ENCODE measurements at regions of chr14 and their contacts with region 1.

Region 1: GRCh38 chr14:104708606-104709268 is 15.3 kb upstream of the ADSS1 start:
- DNase-seq: peak; percentile 58 to 86
- H3K4me3 ChIP-seq: no peak overlapping the region
- H3K27ac ChIP-seq: peak overlapping the region; percentile 54 to 55
- H3K4me1 ChIP-seq: peaks cover 0 to 8% (median 4%) of the 10 kb centered on the region in 4 donors
- H3K27me3 ChIP-seq: no peaks in the 10 kb centered on the region
- CTCF ChIP-seq: peak; percentile 96 to 98

Region 2: GRCh38 chr14:104650057-104650981 is 58.4 kb before region 1 on chr14:
- intact Hi-C with region 1: loop called (anchors 1 kb)
- DNase-seq: peak; percentile 51 to 83
- H3K4me3 ChIP-seq: peak overlapping the region; percentile 31 to 51
- H3K27ac ChIP-seq: no peak overlapping the region
- H3K4me1 ChIP-seq: peaks cover 0 to 11% (median 7%) of the 10 kb centered on the region in 4 donors
- H3K27me3 ChIP-seq: peaks cover 0 to 18% of the 10 kb centered on the region in 2 donors
- CTCF ChIP-seq: peak; percentile 91 to 100

Region 3: DNA sequence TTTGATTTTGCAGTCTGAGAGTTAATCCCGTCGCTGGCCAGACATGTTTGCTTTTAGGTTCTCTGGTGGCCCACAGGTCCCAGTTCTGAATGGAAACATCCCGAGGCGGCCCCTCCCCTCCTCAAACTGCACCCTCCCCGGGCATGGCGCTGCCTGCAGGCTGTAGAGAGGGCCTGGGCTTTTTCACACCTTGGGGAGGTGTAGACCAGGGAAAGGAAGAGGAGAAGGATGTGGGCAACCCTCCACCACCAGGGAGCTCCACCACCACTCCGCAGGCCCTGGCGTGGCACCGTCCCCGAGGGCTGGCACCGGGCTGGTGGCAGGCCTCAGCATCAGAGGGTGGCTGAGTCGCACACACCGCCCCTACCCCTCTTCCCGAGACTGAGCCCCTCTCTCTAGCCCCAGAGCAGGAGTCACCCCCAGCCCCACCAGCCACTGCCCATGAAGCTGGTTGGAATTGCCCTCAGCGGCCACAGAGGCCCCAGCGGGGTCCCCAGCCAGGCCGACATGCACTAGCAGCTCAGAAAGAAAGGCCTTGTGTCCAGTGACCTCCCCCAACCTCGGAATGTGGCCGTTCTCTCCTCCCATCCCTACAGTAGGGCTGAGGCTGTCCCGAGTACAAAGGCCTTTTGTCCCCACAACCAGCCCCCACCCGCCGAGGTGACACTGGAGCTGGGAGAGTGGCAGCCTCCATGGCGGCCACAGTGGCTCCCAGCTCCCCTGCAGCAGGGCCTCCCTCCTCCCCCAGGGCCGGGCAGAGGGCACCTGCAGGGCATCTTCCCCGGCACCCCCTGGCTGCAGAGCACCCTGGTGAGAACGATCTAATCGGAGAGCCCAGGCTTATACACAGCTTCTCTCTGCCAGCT is 42.8 kb before region 1 on chr14:
- intact Hi-C with region 1: loop called (anchors 5 kb)
- DNase-seq: peak in 1 of 2 donors; percentile 79
- H3K4me3 ChIP-seq: no peak overlapping the region
- H3K27ac ChIP-seq: no peak overlapping the region
- H3K4me1 ChIP-seq: peaks cover 0 to 11% (median 4%) of the 10 kb centered on the region in 4 donors
- H3K27me3 ChIP-seq: peaks cover 0 to 4% of the 10 kb centered on the region in 2 donors
- CTCF ChIP-seq: peak; percentile 55 to 61

Region 4: GRCh38 chr14:104805326-104805678 is 96.6 kb after region 1 on chr14:
- intact Hi-C with region 1: no loop called
- DNase-seq: no peak
- H3K4me3 ChIP-seq: no peak overlapping the region
- H3K27ac ChIP-seq: no peak overlapping the region
- H3K4me1 ChIP-seq: peaks cover 5 to 36% (median 17%) of the 10 kb centered on the region in 4 donors
- H3K27me3 ChIP-seq: no peaks in the 10 kb centered on the region
- CTCF ChIP-seq: no peak

Measured in tibial artery (tissue), 4 donors.